ENCODE measurements at regions of chr4 and their contacts with region 1.

Region 1: GRCh38 chr4:76515975-76516843 is 81.2 kb downstream of the SHROOM3 start:
- DNase-seq: no peak
- H3K4me3 ChIP-seq: no peak overlapping the region
- H3K27ac ChIP-seq: no peak overlapping the region
- H3K27me3 ChIP-seq: no peaks in the 10 kb centered on the region
- CTCF ChIP-seq: no peak

Region 2: DNA sequence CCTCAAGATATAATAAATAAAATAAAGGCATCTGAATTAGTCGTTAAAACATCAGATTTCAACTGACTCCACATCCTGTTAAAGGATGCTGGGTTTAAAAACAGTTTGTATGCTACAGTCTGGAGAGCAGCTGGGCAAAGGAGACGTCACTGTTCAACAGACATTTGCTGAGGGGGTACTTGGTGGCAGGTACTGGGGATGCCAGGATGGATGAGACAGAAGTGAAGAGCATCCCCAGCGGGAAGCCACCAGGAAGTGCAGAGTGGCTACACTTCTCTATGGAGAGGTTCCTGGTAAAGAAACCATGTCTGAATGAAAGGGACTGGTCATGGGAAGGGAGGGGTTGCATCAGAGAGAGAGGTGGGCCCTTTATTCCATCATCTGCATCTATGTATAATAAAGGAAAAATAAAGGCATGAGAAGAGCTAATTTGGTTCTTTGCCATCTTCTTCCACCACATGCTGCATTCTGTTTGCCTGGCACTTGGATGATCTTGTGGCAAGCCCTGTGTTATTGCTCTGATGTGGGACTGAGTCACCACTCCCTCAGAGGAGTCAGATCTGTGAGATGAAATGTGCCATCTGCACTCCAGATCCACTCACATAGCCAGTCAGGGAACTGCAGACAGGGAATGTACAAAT is 236.8 kb after region 1 on chr4:
- intact Hi-C with region 1: loop called (anchors 5 kb)
- DNase-seq: peak in 2 of 10 donors; percentile 30 to 51
- H3K4me3 ChIP-seq: peak overlapping the region in 4 of 59 donors; percentile 1 to 17 (median 10)
- H3K27ac ChIP-seq: peak overlapping the region in 39 of 59 donors; percentile 1 to 74 (median 49)
- H3K27me3 ChIP-seq: peaks cover 0 to 6% (median 0%) of the 10 kb centered on the region in 45 donors
- CTCF ChIP-seq: no peak

Region 3: GRCh38 chr4:76758290-76758882 is 242.2 kb after region 1 on chr4:
- intact Hi-C with region 1: loop called (anchors 5 kb)
- DNase-seq: peak in 2 of 10 donors; percentile 35 to 58
- H3K4me3 ChIP-seq: no peak overlapping the region
- H3K27ac ChIP-seq: peak overlapping the region in 35 of 59 donors; percentile 2 to 77 (median 48)
- H3K27me3 ChIP-seq: no peaks in the 10 kb centered on the region
- CTCF ChIP-seq: peak; percentile 50 to 84 (median 76)

Region 4: DNA sequence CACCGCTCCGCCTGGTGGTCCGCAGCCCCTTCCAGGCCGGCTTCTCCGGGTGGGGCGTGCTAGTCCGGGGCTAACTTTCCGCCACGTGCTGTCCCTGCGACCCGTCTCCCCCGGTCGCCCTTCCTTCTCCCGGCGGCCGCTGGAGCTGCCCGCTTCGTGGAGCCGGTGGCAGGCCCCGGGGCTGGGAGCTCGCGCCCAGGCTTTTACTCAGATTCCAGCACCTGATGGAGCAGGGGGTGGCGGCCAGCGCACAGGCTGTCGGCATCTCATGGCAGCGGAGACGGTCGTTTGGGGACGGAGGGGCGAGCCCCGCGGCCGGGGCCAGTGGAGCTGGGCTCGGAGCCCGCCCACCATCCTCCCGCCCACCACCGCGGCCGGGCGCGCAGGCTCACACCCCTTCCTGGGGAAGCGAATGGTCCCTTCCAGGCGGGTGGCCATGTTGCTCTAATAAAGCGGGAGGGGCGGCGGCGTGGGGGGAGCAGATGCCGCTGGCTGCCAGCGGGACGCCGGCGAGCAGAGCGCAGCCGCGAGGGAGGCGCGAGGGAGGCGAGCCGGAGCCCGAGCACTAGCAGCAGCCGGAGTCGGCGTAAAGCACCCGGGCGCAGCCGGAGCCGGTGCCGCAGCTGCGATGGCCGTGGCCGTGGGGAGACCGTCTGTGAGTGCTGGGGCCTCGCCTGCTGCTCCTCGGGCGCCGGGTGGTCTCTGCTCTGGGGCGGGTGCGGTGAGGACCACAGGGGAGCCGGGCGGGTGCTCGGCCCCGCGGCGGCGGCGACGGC is 433.3 kb after region 1 on chr4 and contains the start of gene SEPTIN11:
- intact Hi-C with region 1: loop called in 1 of 2 experiments (anchors 10 kb)
- DNase-seq: peak; percentile 82 to 93 (median 91)
- H3K4me3 ChIP-seq: peak within 1 kb of the TSS; percentile 64 to 96 (median 86)
- H3K27ac ChIP-seq: peak within 1 kb of the TSS; percentile 74 to 99 (median 93)
- H3K27me3 ChIP-seq: no peaks in the 10 kb centered on the region
- CTCF ChIP-seq: peak in 13 of 56 donors; percentile 3 to 46 (median 10)
- total RNA-seq, gene SEPTIN11: 109 to 284 (median 200) TPM

Region 5: GRCh38 chr4:77044461-77045150 is 528.4 kb after region 1 on chr4:
- intact Hi-C with region 1: loop called (anchors 10 kb)
- DNase-seq: no peak
- H3K4me3 ChIP-seq: no peak overlapping the region
- H3K27ac ChIP-seq: peak overlapping the region in 6 of 59 donors; percentile 4 to 53 (median 28)
- H3K27me3 ChIP-seq: no peaks in the 10 kb centered on the region
- CTCF ChIP-seq: peak; percentile 43 to 80 (median 64)

Region 6: GRCh38 chr4:77358315-77358928 is 842.2 kb after region 1 on chr4:
- intact Hi-C with region 1: loop called in 1 of 2 experiments (anchors 5 kb)
- DNase-seq: peak in 2 of 10 donors; percentile 14 to 16
- H3K4me3 ChIP-seq: no peak overlapping the region
- H3K27ac ChIP-seq: no peak overlapping the region
- H3K27me3 ChIP-seq: peaks cover 0 to 7% (median 0%) of the 10 kb centered on the region in 45 donors
- CTCF ChIP-seq: peak; percentile 23 to 76 (median 65)

Measured in dorsolateral prefrontal cortex (tissue), 120 donors.